BJ (cell line): ENCODE measurements at regions of chr7 and their contacts with region 1.

Region 1: GRCh38 chr7:38222481-38223096 is 44.5 kb downstream of the STARD3NL start:
- DNase-seq: no peak
- H3K4me3 ChIP-seq: no peak overlapping the region
- H3K27me3 ChIP-seq: no peaks in the 10 kb centered on the region
- CTCF ChIP-seq: peak; percentile 80

Region 2: DNA sequence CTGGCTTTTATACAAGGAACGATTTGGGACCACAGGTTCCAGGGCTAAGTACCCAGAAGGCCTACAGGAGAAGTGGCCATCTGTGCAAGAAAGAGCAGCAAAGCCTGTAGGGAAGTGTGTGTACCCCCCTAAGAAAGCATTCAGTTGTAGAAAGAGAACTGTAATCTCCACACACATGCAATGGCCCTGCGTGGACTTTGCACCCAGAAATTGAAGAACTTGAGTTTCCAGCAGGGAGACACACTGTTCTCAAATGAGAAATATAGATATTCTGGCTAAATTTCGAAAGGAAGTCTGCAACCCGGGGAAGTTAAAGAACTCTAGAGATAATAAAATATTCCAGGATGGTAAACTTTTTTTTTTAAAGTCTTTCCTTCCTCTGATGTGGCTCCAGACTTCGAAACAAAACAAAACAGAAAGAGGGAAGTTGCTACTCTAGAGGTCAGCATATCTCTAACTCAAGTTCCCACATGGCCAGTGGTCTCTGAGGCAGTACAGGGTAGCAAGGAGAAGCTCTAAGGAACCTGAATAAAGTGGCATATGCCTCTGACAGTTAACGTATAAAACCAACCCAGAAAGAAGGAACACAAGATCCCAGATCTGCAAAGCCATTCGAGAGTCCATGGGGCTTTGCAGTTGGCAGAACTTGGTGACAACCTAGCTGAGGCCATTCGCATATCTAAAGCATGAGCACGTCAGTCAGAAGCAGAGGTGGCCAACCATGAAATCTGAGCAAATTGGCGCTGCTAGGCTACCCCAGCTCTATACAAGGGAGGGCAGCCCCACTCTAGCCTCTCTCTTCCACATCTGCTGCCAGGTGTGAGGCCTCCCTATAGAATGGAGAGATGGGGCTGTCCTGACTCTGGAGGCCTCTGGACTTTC is 830.6 kb before region 1 on chr7:
- CTCF ChIA-PET with region 1: no interaction called
- POLR2A ChIA-PET with region 1: no interaction called
- DNase-seq: no peak
- H3K4me3 ChIP-seq: no peak overlapping the region
- H3K27me3 ChIP-seq: no peaks in the 10 kb centered on the region
- CTCF ChIP-seq: no peak

Region 3: GRCh38 chr7:38195804-38196595 is 26.6 kb before region 1 on chr7:
- CTCF ChIA-PET with region 1: interaction called, 11 read pairs
- POLR2A ChIA-PET with region 1: no interaction called
- DNase-seq: no peak
- H3K4me3 ChIP-seq: no peak overlapping the region
- H3K27me3 ChIP-seq: no peaks in the 10 kb centered on the region
- CTCF ChIP-seq: no peak

Region 4: GRCh38 chr7:38235606-38236005 is 13.0 kb after region 1 on chr7:
- CTCF ChIA-PET with region 1: interaction called, 11 read pairs
- POLR2A ChIA-PET with region 1: no interaction called
- DNase-seq: no peak
- H3K4me3 ChIP-seq: no peak overlapping the region
- H3K27me3 ChIP-seq: no peaks in the 10 kb centered on the region
- CTCF ChIP-seq: no peak

Region 5: GRCh38 chr7:38335492-38336147 is 113.0 kb after region 1 on chr7:
- CTCF ChIA-PET with region 1: interaction called, 23 read pairs
- POLR2A ChIA-PET with region 1: no interaction called
- DNase-seq: peak; percentile 25
- H3K4me3 ChIP-seq: no peak overlapping the region
- H3K27me3 ChIP-seq: no peaks in the 10 kb centered on the region
- CTCF ChIP-seq: peak; percentile 100